Colonic mucosa (tissue), 4 donors: ENCODE measurements at regions of chr10 and their contacts with region 1.

Region 1: DNA sequence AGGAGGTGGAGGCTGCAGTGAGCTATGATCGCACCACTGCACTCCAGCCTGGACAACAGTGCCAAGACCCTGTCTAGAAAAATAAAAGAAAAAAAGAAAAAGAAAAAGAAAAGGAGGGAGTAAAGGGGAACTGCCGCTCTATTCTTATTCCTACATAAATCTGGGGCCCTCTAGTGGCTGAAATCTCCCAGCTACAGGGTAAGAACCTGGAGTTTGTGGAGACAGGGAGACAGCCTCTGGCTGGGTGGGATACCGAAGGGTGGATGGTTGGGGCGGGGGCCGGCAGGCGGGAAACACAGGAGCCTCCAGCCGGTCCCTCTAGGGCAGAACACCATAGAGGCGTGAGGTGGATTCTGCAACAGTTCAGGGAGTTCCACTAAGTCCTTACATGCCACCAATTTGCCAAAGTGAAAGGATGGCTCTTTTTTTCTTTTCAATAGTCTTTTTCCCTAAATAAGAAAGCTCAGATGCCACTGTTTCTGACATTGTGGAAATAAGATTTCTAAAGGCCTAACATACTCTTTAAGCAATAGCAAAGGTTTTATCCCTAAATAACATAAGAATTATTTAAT is 117.3 kb downstream of the SVIL start:
- DNase-seq: peak; percentile 39
- H3K4me3 ChIP-seq: no peak overlapping the region
- H3K27ac ChIP-seq: no peak overlapping the region
- H3K4me1 ChIP-seq: no peaks in the 10 kb centered on the region
- H3K27me3 ChIP-seq: no peaks in the 10 kb centered on the region
- CTCF ChIP-seq: peak; percentile 51

Region 2: GRCh38 chr10:29585488-29585980 is 68.1 kb after region 1 on chr10:
- intact Hi-C with region 1: loop called (anchors 10 kb)
- DNase-seq: no peak
- H3K4me3 ChIP-seq: no peak overlapping the region
- H3K27ac ChIP-seq: no peak overlapping the region
- H3K4me1 ChIP-seq: peaks cover 6% of the 10 kb centered on the region
- H3K27me3 ChIP-seq: no peaks in the 10 kb centered on the region
- CTCF ChIP-seq: no peak